ENCODE measurements at regions of chr6 and their contacts with region 1.

Region 1: GRCh38 chr6:42978839-42979522 is at the start of gene PEX6:
- DNase-seq: peak; percentile 96
- H3K4me3 Mint-ChIP-seq: peak within 1 kb of the TSS; percentile 91
- H3K27ac Mint-ChIP-seq: peak within 1 kb of the TSS; percentile 99
- H3K4me1 Mint-ChIP-seq: peaks cover 31% of the 10 kb centered on the region
- H3K27me3 Mint-ChIP-seq: no peaks in the 10 kb centered on the region
- total RNA-seq, gene PEX6: 26.0 and 27.8 TPM in 2 replicates

Region 2: GRCh38 chr6:43059168-43060033 is 80.4 kb after region 1 on chr6 and contains the starts of genes KLC4 and MRPL2:
- intact Hi-C with region 1: loop called (anchors 1 kb)
- DNase-seq: peak; percentile 96
- H3K4me3 Mint-ChIP-seq: peak within 1 kb of the TSS; percentile 93
- H3K27ac Mint-ChIP-seq: peak within 1 kb of the TSS; percentile 98
- H3K4me1 Mint-ChIP-seq: peaks cover 28% of the 10 kb centered on the region
- H3K27me3 Mint-ChIP-seq: no peaks in the 10 kb centered on the region
- total RNA-seq, gene KLC4: 11.7 and 14.1 TPM in 2 replicates
- total RNA-seq, gene MRPL2: 76.0 and 76.6 TPM in 2 replicates